ENCODE measurements at regions of chr15 and their contacts with region 1.

Region 1: DNA sequence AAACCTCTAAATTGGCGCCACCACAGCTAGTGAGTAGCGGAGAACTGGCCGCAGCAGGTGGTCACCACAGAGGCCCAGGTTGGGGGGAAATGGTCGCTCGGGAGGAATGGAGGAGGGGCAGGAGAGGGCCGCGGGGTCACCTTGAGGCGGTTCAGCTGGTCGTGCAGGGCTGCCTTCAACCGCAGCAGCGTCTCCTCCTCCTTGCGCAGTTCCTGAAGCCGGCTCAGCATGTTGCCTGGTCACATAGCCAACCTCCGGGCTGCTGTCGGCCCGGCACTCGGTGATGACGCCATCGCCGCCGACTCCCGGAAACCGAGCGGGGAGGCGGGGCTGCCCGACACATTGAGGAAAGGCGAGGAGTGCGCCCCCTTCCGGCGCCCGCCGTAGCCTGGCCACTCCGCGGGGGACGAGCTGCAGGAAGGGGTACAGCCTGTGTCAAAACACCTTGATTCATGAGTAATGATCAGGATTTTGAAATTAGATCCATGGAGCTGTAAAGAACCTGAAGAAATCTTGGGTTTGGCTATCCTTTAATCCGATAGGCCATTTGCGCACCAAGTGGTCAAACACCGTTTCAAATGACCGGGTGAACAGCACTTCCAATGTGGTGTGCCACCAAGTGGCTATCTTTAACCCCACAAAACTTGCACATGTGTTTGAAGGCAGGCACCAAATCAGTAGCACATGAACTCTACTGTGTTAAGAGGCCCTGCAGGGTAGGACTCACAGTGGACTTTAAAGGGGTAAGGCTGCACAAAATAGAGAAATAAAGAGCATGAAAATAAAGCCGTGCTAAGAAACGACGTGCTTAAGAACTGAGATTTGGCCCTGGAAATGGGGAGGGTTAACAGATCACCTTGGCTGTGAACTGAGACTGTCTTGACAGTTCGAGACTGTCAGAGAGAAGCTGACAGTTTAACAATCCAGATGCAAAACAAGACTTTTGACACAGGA is at the start of gene SNAPC5:
- DNase-seq: peak; percentile 95 to 99
- H3K4me3 ChIP-seq: peak within 1 kb of the TSS; percentile 81
- CTCF ChIP-seq: peak in 2 of 3 donors; percentile 79 to 88
- POLR2A ChIP-seq: no peak
- total RNA-seq, gene SNAPC5: 17.1 to 26.3 (median 23.6) TPM

Region 2: GRCh38 chr15:66386204-66387123 is 111.3 kb before region 1 on chr15 and contains the start of gene MAP2K1:
- intact Hi-C with region 1: loop called (anchors 10 kb)
- DNase-seq: peak; percentile 97 to 100
- H3K4me3 ChIP-seq: peak within 1 kb of the TSS; percentile 71
- CTCF ChIP-seq: peak in 1 of 3 donors; percentile 29
- POLR2A ChIP-seq: no peak
- total RNA-seq, gene MAP2K1: 19.1 to 38.1 (median 26.7) TPM

Region 3: GRCh38 chr15:66673410-66674322 is 175.9 kb after region 1 on chr15:
- intact Hi-C with region 1: no loop called
- DNase-seq: no peak
- H3K4me3 ChIP-seq: no peak overlapping the region
- CTCF ChIP-seq: no peak
- POLR2A ChIP-seq: no peak